CD4-positive, alpha-beta T cell (primary cell): ENCODE measurements at regions of chr13 and their contacts with region 1.

Region 1: DNA sequence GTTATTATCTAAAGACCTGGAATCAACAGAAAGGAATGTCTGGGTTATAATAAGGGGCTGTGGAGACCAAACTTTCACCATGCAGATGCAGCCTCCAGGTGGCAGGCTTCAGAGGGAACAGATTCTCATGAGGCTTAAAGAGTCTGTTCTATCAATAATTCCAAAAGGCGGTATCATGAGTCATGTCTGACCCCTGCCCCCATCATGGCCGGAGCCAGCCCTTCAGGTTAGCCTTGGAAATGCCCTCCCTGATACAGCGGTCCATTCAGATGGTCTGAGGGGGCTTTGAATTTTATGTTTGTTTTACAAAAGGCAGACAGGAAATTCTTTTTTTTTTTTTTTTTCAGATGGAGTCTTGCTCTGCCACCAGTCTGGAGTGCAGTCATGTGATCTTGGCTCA is 21.7 kb upstream of the LAMP1 start:
- DNase-seq: peak in 13 of 14 experiments; percentile 7 to 64 (median 28)
- ATAC-seq: peak; percentile 68
- H3K4me3 ChIP-seq: no peak overlapping the region
- H3K4me3 Mint-ChIP-seq: no peak overlapping the region
- H3K27ac ChIP-seq: no peak overlapping the region
- H3K27ac Mint-ChIP-seq: no peak overlapping the region
- H3K4me1 ChIP-seq: peaks cover 4% of the 10 kb centered on the region
- H3K4me1 Mint-ChIP-seq: peaks cover 12% of the 10 kb centered on the region
- H3K27me3 ChIP-seq: peaks cover 0 to 4% of the 10 kb centered on the region in 2 experiments
- H3K27me3 Mint-ChIP-seq: peaks cover 19% of the 10 kb centered on the region
- CTCF ChIP-seq: peak; percentile 52

Region 2: DNA sequence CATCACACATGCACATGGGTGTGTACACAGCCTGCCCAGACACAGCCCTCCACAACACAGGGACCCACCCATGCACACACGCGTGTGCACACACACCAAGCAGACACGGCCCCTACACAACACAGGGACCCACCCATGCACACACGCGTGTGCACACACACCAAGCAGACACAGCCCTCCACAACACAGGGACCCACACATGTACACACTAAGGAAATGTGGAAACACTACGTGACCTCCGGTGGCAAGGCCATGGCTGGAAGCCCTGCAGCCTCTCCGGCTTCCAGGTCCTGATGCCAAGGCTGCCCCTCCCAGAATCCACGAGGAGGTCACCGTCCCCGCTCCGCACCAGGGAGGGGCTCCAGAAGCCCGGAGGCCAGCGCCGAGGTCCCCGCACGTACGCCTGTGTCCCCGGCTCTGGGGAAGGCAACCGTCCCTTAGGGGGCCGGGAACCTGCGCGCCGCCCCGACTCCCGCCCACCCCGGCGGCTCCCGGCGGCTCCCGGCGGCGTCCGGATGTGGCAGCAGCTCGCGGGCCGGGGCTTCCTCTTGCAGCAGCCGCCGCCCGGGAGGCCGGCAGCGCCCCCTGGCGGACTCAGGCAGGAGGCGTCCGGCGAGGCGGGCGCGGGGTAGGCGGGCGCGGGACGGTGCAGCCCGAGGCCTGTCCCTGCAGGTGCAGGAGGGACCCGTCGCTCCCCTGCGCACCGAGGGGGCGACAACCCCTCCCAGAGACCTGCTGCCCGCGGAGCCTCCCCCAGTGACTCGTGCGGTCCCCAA is 118.4 kb after region 1 on chr13:
- CTCF ChIA-PET with region 1: interaction called, 5 read pairs
- POLR2A ChIA-PET with region 1: interaction called, 3 read pairs
- intact Hi-C with region 1: loop called (anchors 1 kb)
- DNase-seq: peak; percentile 63 to 92 (median 80)
- ATAC-seq: peak; percentile 96
- H3K4me3 ChIP-seq: peak overlapping the region; percentile 73
- H3K4me3 Mint-ChIP-seq: peak overlapping the region; percentile 89
- H3K27ac ChIP-seq: no peak overlapping the region
- H3K27ac Mint-ChIP-seq: no peak overlapping the region
- H3K4me1 ChIP-seq: peaks cover 11% of the 10 kb centered on the region
- H3K4me1 Mint-ChIP-seq: peaks cover 6% of the 10 kb centered on the region
- H3K27me3 ChIP-seq: no peaks in the 10 kb centered on the region
- H3K27me3 Mint-ChIP-seq: no peaks in the 10 kb centered on the region
- CTCF ChIP-seq: peak; percentile 73